K562 (cell line): ENCODE measurements at regions of chr12 and their contacts with region 1.

Region 1: DNA sequence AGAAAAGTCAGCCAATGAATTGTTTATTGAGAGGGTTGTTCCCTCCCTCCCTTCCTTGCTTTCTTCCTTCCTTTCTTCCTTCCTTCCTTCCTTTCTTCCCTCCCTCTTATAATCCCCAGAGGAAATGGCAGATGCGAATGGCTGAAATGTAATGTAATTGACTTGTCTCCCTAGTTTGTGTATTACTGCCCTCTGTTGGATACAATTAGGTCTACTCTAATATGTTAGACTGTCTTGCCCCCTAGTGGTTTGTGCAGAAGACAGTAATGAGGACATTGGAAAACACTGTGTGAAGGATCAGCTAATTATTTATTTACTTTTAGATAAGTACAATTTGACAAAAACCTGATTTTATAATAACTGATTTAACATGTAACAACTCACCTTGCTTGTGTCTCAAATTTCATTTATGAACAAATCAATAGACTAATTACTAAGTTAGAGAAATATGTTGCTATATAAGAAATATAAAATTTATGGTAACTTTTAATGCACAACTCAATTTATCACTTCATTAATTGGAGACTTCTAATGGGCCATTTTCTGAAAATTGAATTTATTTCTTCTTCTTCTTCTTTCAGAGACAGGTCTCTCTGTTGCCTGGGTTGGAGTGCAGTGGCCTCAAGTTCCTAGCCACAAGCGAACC is 229.8 kb upstream of the LRIG3 start:
- DNase-seq: peak; percentile 16 to 57 (median 20)
- ATAC-seq: peak; percentile 87
- H3K4me3 ChIP-seq: no peak overlapping the region
- H3K27ac ChIP-seq: no peak overlapping the region
- H3K4me1 ChIP-seq: no peaks in the 10 kb centered on the region
- H3K27me3 ChIP-seq: no peaks in the 10 kb centered on the region
- CTCF ChIP-seq: peak; percentile 73 to 98 (median 98)
- EP300 ChIP-seq: no peak
- POLR2A ChIP-seq: no peak
- RAD21 ChIP-seq: peak; percentile 59 to 85

Region 2: DNA sequence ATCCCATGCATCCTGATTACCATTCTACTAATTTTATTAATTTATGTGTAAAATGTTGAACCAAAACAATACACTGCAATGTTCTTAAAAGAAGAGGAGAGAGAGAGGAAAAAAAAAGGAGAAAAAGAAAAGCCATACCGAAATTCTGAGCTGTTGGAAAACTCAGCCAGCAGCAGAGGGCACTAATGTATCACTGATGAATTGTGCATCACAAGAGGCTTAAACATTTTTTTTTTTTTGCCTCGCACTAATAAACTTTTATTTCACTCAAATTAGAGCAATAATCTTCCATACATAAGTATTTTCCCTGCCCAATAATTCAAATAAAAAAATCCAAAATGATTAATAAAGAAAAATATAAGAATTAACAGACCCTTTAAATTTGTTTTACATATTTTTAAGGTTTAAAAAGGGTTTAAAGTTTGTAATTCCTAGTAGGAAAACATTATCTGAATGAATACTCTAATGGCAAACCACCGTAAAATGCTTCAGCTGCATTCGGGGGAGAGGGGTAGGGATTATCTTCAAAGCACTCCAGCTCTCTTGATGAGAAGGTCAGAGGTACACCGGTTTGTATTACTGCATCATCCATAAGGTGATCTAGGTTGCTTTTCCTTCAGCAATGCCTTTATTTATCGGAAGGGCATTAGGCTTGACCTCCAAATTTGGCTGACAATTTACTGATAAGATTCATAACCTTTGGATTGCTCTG is 1166.8 kb before region 1 on chr12:
- CTCF ChIA-PET with region 1: interaction called, 3 read pairs
- POLR2A ChIA-PET with region 1: no interaction called
- in situ Hi-C with region 1: loop called (anchors 25 kb)
- intact Hi-C with region 1: no loop called
- DNase-seq: peak in 2 of 4 experiments; percentile 14 to 55
- ATAC-seq: peak; percentile 67; the same call in 2 of the 3 replicates
- H3K4me3 ChIP-seq: no peak overlapping the region
- H3K27ac ChIP-seq: no peak overlapping the region
- H3K4me1 ChIP-seq: no peaks in the 10 kb centered on the region
- H3K27me3 ChIP-seq: no peaks in the 10 kb centered on the region
- CTCF ChIP-seq: peak; percentile 55 to 74 (median 61); a peak in 5 of 6 replicates
- EP300 ChIP-seq: no peak
- POLR2A ChIP-seq: no peak
- RAD21 ChIP-seq: peak; percentile 79 to 87

Region 3: GRCh38 chr12:58346032-58346632 is 804.0 kb before region 1 on chr12:
- CTCF ChIA-PET with region 1: interaction called, 11 read pairs
- POLR2A ChIA-PET with region 1: no interaction called
- in situ Hi-C with region 1: no loop called
- intact Hi-C with region 1: loop called (anchors 1 kb)
- DNase-seq: peak; percentile 17 to 49 (median 41)
- ATAC-seq: peak; percentile 68
- H3K4me3 ChIP-seq: no peak overlapping the region
- H3K27ac ChIP-seq: no peak overlapping the region
- H3K4me1 ChIP-seq: no peaks in the 10 kb centered on the region
- H3K27me3 ChIP-seq: no peaks in the 10 kb centered on the region
- CTCF ChIP-seq: peak; percentile 32 to 76 (median 51); a peak in 5 of 6 replicates
- EP300 ChIP-seq: no peak
- POLR2A ChIP-seq: no peak
- RAD21 ChIP-seq: peak; percentile 74 to 75

Region 4: DNA sequence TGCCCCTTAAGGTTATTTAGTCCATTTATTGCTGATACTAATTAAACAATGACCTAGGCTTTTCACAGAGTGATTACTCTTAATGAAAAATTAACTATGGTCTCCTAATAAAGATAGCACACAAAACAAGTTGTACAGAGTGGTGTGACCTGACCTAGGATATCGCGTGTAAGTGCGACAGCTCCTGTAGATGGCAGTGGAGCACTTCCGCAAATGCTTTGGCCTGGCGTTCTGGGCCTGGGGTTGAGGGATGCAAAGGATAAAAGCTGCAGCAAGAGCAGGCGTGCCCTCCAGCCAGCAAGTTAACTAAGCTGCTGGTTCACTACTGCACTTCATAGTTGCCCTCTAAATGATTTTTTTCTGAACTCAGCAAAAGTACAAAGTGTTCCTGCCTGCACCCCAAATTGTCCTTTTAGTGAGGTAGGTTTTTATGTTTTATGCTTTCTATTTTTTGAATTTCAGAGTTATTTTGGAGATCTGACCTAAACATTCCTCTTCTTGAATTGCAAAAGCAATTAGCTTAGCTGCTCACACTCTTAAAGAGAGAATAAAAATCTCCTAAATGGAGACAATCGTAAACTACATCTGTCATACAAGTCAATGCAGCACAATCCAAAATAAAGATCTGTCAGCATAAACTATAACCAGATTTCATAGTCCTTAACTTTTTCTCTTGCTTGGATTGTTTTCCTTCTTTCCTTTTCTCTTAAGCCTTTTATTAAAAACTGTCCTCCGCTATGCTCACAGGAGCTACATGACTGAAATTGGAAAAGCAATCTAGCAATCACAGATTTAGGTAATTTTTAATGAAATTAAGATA is 609.4 kb before region 1 on chr12:
- CTCF ChIA-PET with region 1: no interaction called
- POLR2A ChIA-PET with region 1: no interaction called
- in situ Hi-C with region 1: no loop called
- intact Hi-C with region 1: loop called (anchors 1 kb)
- DNase-seq: peak in 1 of 4 experiments; percentile 21
- ATAC-seq: peak; percentile 49; the same call in 1 of the 3 replicates
- H3K4me3 ChIP-seq: no peak overlapping the region
- H3K27ac ChIP-seq: no peak overlapping the region
- H3K4me1 ChIP-seq: no peaks in the 10 kb centered on the region
- H3K27me3 ChIP-seq: no peaks in the 10 kb centered on the region
- CTCF ChIP-seq: peak in 2 of 3 experiments; percentile 16 to 34; a peak in 1 of 6 replicates
- EP300 ChIP-seq: no peak
- POLR2A ChIP-seq: no peak
- RAD21 ChIP-seq: peak; percentile 13 to 46; a peak in 2 of 4 replicates

Region 5: DNA sequence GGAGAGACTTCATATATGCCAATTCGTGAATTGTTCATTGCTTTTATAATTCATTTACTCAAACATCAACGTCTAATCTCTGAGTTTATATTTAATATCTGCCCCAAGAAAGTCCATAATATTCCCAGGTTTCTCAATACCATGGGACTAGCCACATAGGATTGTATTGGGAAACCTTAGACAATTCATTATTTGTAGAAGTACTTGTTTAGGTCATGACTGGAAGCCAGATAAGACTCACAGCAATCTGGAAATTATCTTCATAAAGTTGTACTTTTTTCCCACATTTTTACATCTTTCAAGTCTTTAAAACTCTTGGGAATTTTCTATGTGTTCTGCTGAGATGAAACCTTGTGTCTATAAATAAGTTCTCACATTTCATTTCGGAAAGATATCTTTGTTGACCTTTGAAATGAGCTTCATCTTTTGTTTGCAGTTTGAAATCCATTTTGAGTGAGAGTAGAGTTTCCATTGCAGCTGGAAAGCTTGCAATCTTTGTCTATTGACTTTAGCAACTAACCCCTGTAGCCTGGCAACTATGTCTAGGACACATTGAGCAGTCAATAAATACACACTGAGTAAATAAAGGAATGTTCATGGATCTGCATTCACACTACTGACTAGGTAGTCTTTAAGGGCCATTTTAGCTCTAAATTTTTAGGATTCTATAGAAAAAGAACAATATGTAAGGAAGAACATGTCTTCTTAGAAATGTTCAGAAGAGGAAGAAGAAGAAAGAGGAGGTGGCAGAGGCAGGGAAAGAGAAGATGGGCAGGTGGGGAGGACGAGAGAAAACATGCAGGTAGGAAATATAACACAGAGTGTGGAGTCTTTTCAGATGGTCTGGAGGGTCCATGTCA is 384.2 kb before region 1 on chr12:
- CTCF ChIA-PET with region 1: no interaction called
- POLR2A ChIA-PET with region 1: no interaction called
- in situ Hi-C with region 1: no loop called
- intact Hi-C with region 1: no loop called
- DNase-seq: no peak
- ATAC-seq: no peak
- H3K4me3 ChIP-seq: no peak overlapping the region
- H3K27ac ChIP-seq: no peak overlapping the region
- H3K4me1 ChIP-seq: no peaks in the 10 kb centered on the region
- H3K27me3 ChIP-seq: no peaks in the 10 kb centered on the region
- CTCF ChIP-seq: no peak
- EP300 ChIP-seq: no peak
- POLR2A ChIP-seq: no peak
- RAD21 ChIP-seq: no peak